ENCODE measurements at regions of chr1 and their contacts with region 1.

Region 1: DNA sequence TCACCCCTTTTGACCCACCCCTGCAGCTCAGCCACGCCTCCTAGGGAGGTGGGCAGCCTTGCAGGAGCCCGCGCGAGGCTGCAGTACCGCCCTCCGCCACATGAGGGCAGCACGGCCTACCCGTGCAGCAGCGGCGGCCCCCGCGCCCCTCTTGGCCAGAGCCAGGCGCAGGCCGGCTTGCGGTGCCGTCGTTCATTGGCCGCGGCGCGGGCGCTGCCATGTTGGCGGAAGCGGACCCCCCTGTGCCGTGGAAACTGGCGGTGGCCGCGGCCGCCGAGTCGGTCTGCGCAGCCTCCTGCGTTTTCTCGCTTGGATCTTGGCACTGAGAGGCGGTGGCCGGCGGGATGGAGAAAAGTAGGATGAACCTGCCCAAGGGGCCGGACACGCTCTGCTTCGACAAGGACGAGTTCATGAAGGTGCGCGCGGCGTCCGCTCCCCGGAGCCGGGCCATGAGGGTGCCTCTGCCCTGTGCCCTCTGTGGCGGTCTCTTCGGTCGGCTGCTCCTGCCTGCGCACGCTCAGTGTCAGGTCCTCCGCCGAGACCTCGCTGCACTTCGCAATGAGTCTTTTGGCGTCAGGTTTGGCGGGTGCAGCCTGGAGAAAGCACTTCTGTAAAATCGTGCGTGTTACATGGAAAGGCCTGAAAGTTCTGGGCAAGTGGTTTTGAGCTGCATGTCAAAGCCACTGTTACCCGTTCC is at the start of gene COG2:
- DNase-seq: peak; percentile 84 to 100 (median 91)
- ATAC-seq: peak; percentile 99
- H3K4me3 ChIP-seq: peak within 1 kb of the TSS; percentile 56
- H3K4me3 Mint-ChIP-seq: peak within 1 kb of the TSS; percentile 90 to 100 (median 96)
- H3K27ac ChIP-seq: peak within 1 kb of the TSS; percentile 76
- H3K27ac Mint-ChIP-seq: peak within 1 kb of the TSS; percentile 81 to 98 (median 93)
- H3K4me1 ChIP-seq: peaks cover 20 to 24% of the 10 kb centered on the region in 2 donors
- H3K4me1 Mint-ChIP-seq: peaks cover 36 to 56% (median 48%) of the 10 kb centered on the region in 7 donors
- H3K27me3 ChIP-seq: peaks cover 0 to 7% of the 10 kb centered on the region in 2 donors
- H3K27me3 Mint-ChIP-seq: peaks cover 0 to 24% (median 12%) of the 10 kb centered on the region in 5 donors
- total RNA-seq, gene COG2: 21.6 to 47.5 (median 34.7) TPM

Region 2: DNA sequence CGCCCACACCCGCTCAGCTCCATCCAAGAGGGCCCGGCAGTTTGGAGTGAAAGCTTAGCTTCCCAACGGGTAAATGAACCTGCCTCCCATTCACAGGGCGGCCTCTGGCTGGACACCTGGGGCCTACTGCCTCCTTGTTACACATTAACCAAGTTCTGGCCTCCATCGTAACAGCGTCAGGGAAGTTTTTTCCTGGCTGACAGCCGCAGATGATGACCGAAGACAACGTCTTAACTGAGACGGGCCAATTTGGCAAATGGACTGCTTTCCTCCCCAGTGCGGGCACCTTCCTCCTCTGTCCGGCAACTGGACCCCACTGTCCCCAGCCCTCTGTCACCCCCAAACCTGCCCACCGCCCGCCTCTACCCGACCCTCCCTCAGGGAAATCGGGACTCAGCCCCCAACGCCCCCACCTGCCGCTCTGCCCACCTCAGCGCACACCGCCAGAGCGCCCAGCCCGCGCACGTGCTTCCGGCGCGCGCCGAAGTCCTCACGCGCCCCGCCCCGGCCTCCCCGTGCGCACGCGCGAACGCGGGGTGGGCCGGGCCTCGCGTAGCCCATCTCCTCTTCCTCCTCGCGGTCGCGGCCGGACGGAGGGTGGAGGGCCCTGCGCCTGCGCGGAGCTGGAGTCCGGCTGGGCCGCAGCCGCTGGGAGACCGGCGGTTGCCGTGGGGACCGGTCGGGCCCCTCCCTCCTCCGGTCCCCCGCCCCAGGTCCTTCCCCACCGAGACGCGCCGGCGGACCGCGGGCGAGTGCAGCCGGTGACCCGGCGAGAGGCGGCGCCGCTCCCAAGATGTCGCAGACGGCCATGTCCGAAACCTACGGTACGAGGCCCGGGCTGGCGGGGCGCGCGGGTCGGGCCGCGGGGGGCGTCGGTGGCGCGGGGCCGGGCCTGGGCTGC is 1371.6 kb before region 1 on chr1 and contains the start of gene RAB4A:
- CTCF ChIA-PET with region 1: no interaction called
- POLR2A ChIA-PET with region 1: no interaction called
- intact Hi-C with region 1: loop called in 1 of 2 experiments (anchors 10 kb)
- DNase-seq: peak; percentile 48 to 85 (median 75)
- ATAC-seq: peak; percentile 94
- H3K4me3 ChIP-seq: peak within 1 kb of the TSS; percentile 77
- H3K4me3 Mint-ChIP-seq: peak within 1 kb of the TSS; percentile 89 to 99 (median 94)
- H3K27ac ChIP-seq: peak within 1 kb of the TSS; percentile 62
- H3K27ac Mint-ChIP-seq: peak within 1 kb of the TSS; percentile 76 to 95 (median 89)
- H3K4me1 ChIP-seq: peaks cover 13 to 17% of the 10 kb centered on the region in 2 donors
- H3K4me1 Mint-ChIP-seq: peaks cover 25 to 45% (median 35%) of the 10 kb centered on the region in 7 donors
- H3K27me3 ChIP-seq: no peaks in the 10 kb centered on the region
- H3K27me3 Mint-ChIP-seq: no peaks in the 10 kb centered on the region
- total RNA-seq, gene RAB4A: 24.0 to 47.9 (median 36.9) TPM

Region 3: DNA sequence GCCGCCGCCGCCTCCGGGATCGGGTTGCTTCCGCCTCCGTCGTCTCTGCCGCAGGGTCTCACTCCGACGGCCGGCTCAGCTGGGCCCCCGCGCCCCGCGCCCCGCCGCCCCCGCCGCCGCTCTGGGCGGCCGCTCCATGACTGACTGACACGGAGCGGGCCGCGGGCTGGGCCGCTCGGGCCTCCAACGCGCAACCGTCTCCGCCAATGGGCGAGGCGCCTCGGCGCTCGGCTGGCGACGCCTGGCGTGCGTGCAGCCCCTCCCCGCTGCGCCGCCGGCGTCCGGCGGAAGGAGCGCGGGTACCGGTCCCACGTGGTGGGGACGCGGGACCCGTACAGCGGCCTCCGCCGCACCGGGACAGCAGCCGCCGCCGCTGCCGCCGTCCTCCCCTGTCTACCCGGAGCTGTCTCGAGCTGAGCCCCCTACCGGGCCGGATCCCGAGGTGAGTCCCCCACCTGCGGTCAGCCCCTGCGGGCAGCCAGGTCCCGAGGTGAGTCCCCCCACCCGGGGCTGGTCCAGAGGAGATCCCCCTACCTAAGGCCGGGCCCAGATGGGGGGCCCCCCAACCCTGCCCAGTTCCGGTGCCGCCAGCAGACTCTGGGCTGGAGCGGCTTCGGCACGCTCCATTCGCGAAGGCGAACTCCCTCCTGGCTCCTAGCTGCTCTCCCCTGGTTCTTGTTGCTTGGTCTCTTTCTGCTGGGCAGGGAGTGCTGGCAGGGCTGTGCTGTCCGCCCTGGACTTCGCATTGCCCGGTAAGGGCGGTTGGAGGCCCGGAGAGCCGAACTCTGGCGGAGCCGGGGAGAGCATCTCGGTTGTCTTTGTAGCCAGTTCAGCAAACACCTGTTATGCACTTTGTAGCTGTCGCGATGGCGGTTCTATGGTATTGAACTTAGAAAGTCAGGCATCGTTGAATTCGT is 1016.2 kb before region 1 on chr1 and contains the starts of genes TAF5L and URB2:
- CTCF ChIA-PET with region 1: no interaction called
- POLR2A ChIA-PET with region 1: no interaction called
- intact Hi-C with region 1: loop called in 1 of 2 experiments (anchors 1 kb)
- DNase-seq: peak; percentile 81 to 91 (median 85)
- ATAC-seq: peak; percentile 97
- H3K4me3 ChIP-seq: peak within 1 kb of the TSS; percentile 93
- H3K4me3 Mint-ChIP-seq: peak within 1 kb of the TSS; percentile 94 to 100 (median 98)
- H3K27ac ChIP-seq: peak within 1 kb of the TSS; percentile 80
- H3K27ac Mint-ChIP-seq: peak within 1 kb of the TSS; percentile 93 to 98 (median 97)
- H3K4me1 ChIP-seq: peaks cover 21 to 27% of the 10 kb centered on the region in 2 donors
- H3K4me1 Mint-ChIP-seq: peaks cover 39 to 69% (median 59%) of the 10 kb centered on the region in 7 donors
- H3K27me3 ChIP-seq: no peaks in the 10 kb centered on the region
- H3K27me3 Mint-ChIP-seq: no peaks in the 10 kb centered on the region
- total RNA-seq, gene TAF5L: 17.3 to 27.2 (median 19.8) TPM
- total RNA-seq, gene URB2: 6.2 to 18.2 (median 11.0) TPM

Region 4: DNA sequence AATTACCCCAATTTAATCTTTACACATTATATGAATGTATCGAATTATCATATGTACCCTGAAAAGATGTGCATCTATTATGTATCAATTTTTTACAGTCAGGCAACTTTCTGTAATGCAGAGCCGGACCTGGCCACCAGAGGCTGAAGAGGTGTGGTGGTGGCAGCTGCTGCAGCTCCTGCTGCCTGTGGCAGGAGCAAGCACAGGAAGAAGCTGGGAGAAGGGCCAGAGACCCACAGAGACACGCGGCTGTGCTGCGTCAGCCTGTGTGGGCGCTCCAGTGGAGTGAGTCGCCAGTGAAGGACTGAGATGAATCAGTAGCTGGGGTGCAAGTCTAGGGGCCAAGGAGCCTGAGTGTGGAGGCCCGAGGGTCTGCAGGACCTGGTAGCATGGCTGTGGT is 74.4 kb before region 1 on chr1:
- CTCF ChIA-PET with region 1: no interaction called
- POLR2A ChIA-PET with region 1: no interaction called
- intact Hi-C with region 1: no loop called
- DNase-seq: peak in 1 of 9 donors; percentile 31
- ATAC-seq: no peak
- H3K4me3 ChIP-seq: no peak overlapping the region
- H3K4me3 Mint-ChIP-seq: peak overlapping the region in 1 of 10 donors; percentile 24
- H3K27ac ChIP-seq: no peak overlapping the region
- H3K27ac Mint-ChIP-seq: no peak overlapping the region
- H3K4me1 ChIP-seq: no peaks in the 10 kb centered on the region
- H3K4me1 Mint-ChIP-seq: peaks cover 0 to 4% (median 0%) of the 10 kb centered on the region in 7 donors
- H3K27me3 ChIP-seq: no peaks in the 10 kb centered on the region
- H3K27me3 Mint-ChIP-seq: peaks cover 22 to 42% (median 33%) of the 10 kb centered on the region in 5 donors

Region 5: GRCh38 chr1:230744382-230744781 is 102.0 kb after region 1 on chr1:
- CTCF ChIA-PET with region 1: no interaction called
- POLR2A ChIA-PET with region 1: no interaction called
- intact Hi-C with region 1: no loop called
- DNase-seq: no peak
- ATAC-seq: no peak
- H3K4me3 ChIP-seq: no peak overlapping the region
- H3K4me3 Mint-ChIP-seq: no peak overlapping the region
- H3K27ac ChIP-seq: no peak overlapping the region
- H3K27ac Mint-ChIP-seq: no peak overlapping the region
- H3K4me1 ChIP-seq: no peaks in the 10 kb centered on the region
- H3K4me1 Mint-ChIP-seq: no peaks in the 10 kb centered on the region
- H3K27me3 ChIP-seq: no peaks in the 10 kb centered on the region
- H3K27me3 Mint-ChIP-seq: peaks cover 6 to 27% (median 13%) of the 10 kb centered on the region in 5 donors

Region 6: GRCh38 chr1:230867903-230868735 is 225.7 kb after region 1 on chr1 and contains the start of gene C1orf198:
- CTCF ChIA-PET with region 1: no interaction called
- POLR2A ChIA-PET with region 1: no interaction called
- intact Hi-C with region 1: loop called (anchors 1 to 2 kb)
- DNase-seq: peak; percentile 48 to 84 (median 69)
- ATAC-seq: peak; percentile 97
- H3K4me3 ChIP-seq: peak within 1 kb of the TSS; percentile 76
- H3K4me3 Mint-ChIP-seq: peak within 1 kb of the TSS; percentile 70 to 94 (median 88)
- H3K27ac ChIP-seq: peak within 1 kb of the TSS; percentile 67
- H3K27ac Mint-ChIP-seq: peak within 1 kb of the TSS in 8 of 9 donors; percentile 29 to 84 (median 62)
- H3K4me1 ChIP-seq: peaks cover 0 to 5% of the 10 kb centered on the region in 2 donors
- H3K4me1 Mint-ChIP-seq: peaks cover 10 to 33% (median 24%) of the 10 kb centered on the region in 7 donors
- H3K27me3 ChIP-seq: peaks cover 0 to 7% of the 10 kb centered on the region in 2 donors
- H3K27me3 Mint-ChIP-seq: peaks cover 13 to 38% (median 25%) of the 10 kb centered on the region in 5 donors
- total RNA-seq, gene C1orf198: 2.9 to 6.0 (median 3.7) TPM

Region 7: GRCh38 chr1:231040019-231040799 is 397.8 kb after region 1 on chr1 and contains the start of gene FAM89A:
- CTCF ChIA-PET with region 1: no interaction called
- POLR2A ChIA-PET with region 1: interaction called, 5 read pairs
- intact Hi-C with region 1: loop called (anchors 1 to 10 kb)
- DNase-seq: peak; percentile 44 to 79 (median 70)
- ATAC-seq: peak; percentile 91
- H3K4me3 ChIP-seq: peak within 1 kb of the TSS; percentile 67
- H3K4me3 Mint-ChIP-seq: peak within 1 kb of the TSS; percentile 81 to 90 (median 82)
- H3K27ac ChIP-seq: peak within 1 kb of the TSS; percentile 63
- H3K27ac Mint-ChIP-seq: peak within 1 kb of the TSS in 8 of 9 donors; percentile 36 to 83 (median 69)
- H3K4me1 ChIP-seq: peaks cover 10 to 13% of the 10 kb centered on the region in 2 donors
- H3K4me1 Mint-ChIP-seq: peaks cover 27 to 49% (median 36%) of the 10 kb centered on the region in 7 donors
- H3K27me3 ChIP-seq: no peaks in the 10 kb centered on the region
- H3K27me3 Mint-ChIP-seq: peaks cover 0 to 37% (median 0%) of the 10 kb centered on the region in 5 donors
- total RNA-seq, gene FAM89A: 4.5 to 9.0 (median 6.9) TPM

Region 8: DNA sequence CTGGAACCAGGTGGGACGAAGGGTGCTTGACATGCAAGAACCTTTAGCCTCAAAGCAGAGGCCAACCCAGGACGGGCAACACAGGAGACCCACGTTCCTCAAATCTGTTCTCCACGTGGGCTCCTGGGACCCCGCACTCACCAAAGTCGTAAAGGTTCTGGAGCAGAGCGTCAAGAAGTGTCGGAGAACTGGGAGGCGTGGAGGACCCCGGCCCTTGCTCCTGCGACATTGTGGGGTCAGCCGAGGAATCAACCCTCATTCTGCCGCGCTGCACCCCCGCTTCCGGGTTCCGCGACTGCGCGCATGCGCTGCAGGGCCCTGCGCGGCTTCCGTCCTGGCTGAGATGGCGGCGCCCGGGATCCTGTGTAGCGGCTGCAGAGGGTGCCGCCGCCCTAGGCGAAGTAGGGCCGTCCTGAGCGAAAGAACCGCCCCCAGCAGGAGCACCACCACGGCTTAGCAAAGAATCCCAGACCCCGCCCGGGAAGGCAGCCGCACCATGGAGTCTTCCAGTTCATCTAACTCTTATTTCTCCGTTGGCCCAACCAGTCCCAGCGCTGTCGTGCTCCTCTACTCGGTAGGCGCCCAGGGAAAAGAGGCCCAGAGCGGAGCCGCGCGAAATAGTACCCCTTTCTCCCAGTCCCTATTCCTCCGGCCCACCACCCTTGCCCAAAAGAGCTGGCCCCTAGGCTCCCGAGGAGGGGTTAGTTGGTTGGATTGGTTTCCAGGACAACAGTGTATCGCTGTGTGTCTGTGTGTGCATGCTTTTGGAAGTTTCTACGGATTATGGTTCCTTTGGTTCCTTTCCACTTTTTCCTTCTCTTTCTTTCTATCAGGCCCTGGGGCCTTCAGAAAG is 598.7 kb after region 1 on chr1 and contains the start of gene GNPAT:
- CTCF ChIA-PET with region 1: no interaction called
- POLR2A ChIA-PET with region 1: interaction called, 3 read pairs
- intact Hi-C with region 1: loop called (anchors 1 kb)
- DNase-seq: peak; percentile 86 to 97 (median 92)
- ATAC-seq: peak; percentile 98
- H3K4me3 ChIP-seq: peak within 1 kb of the TSS; percentile 98
- H3K4me3 Mint-ChIP-seq: peak within 1 kb of the TSS; percentile 90 to 99 (median 95)
- H3K27ac ChIP-seq: peak within 1 kb of the TSS; percentile 93
- H3K27ac Mint-ChIP-seq: peak within 1 kb of the TSS; percentile 92 to 99 (median 97)
- H3K4me1 ChIP-seq: peaks cover 17 to 44% of the 10 kb centered on the region in 2 donors
- H3K4me1 Mint-ChIP-seq: peaks cover 47 to 86% (median 76%) of the 10 kb centered on the region in 7 donors
- H3K27me3 ChIP-seq: no peaks in the 10 kb centered on the region
- H3K27me3 Mint-ChIP-seq: no peaks in the 10 kb centered on the region
- total RNA-seq, gene GNPAT: 17.3 to 41.0 (median 35.5) TPM

Region 9: DNA sequence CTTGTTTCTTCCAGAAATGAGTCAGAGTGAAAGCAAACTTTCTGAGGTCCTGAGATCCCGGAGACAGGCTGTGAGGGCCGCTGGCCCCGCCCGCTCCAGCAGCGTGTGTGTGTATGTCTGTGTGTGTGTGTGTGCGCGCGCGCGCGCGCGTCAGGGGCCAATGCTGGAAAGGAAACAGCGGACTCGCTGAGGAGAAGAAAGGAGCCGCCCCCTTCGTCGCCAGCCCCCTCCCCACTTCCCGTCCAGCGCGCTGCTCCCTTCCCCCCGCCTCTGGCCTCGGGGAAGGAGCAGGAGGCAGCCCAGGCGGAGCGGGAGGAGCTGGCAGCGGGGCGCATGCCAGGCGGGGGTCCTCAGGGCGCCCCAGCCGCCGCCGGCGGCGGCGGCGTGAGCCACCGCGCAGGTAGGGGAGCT is 984.1 kb after region 1 on chr1 and contains the start of gene DISC1:
- CTCF ChIA-PET with region 1: no interaction called
- POLR2A ChIA-PET with region 1: no interaction called
- intact Hi-C with region 1: loop called in 1 of 2 experiments (anchors 10 kb)
- DNase-seq: peak; percentile 49 to 74 (median 70)
- ATAC-seq: peak; percentile 88
- H3K4me3 ChIP-seq: peak within 1 kb of the TSS; percentile 74
- H3K4me3 Mint-ChIP-seq: peak within 1 kb of the TSS; percentile 88 to 98 (median 94)
- H3K27ac ChIP-seq: peak within 1 kb of the TSS; percentile 60
- H3K27ac Mint-ChIP-seq: peak within 1 kb of the TSS; percentile 77 to 97 (median 92)
- H3K4me1 ChIP-seq: peaks cover 8 to 16% of the 10 kb centered on the region in 2 donors
- H3K4me1 Mint-ChIP-seq: peaks cover 17 to 52% (median 38%) of the 10 kb centered on the region in 7 donors
- H3K27me3 ChIP-seq: no peaks in the 10 kb centered on the region
- H3K27me3 Mint-ChIP-seq: peaks cover 0 to 36% (median 0%) of the 10 kb centered on the region in 5 donors
- total RNA-seq, gene DISC1: 17.1 to 33.8 (median 23.5) TPM

Measured in naive thymus-derived CD4-positive, alpha-beta T cell (primary cell).